ENCODE measurements at regions of chr1 and their contacts with region 1.

Region 1: DNA sequence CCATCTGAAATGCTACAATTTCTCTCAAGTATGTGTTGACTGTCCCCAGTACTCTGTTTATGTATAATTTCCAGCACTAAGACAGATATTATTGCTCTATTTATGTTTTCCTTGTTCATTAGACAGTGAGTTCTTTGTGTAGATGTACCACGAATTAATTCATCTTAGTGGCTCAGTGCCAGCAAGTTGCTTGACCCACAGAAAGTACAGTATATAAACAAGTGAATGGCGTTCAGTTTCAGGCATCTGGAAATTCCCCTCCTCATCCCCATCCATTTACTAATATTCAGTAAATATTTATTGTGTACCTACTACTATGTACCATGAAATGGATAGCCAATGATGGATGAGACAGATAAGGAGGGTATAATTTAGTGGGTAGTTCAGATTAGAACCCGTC is 104.3 kb downstream of the WDR3 start:
- DNase-seq: no peak
- H3K4me3 Mint-ChIP-seq: no peak overlapping the region
- H3K27ac Mint-ChIP-seq: no peak overlapping the region
- H3K4me1 Mint-ChIP-seq: no peaks in the 10 kb centered on the region
- H3K27me3 Mint-ChIP-seq: peaks cover 6% of the 10 kb centered on the region

Region 2: GRCh38 chr1:117967477-117967876 is 66.4 kb before region 1 on chr1:
- intact Hi-C with region 1: no loop called
- DNase-seq: no peak
- H3K4me3 Mint-ChIP-seq: no peak overlapping the region
- H3K27ac Mint-ChIP-seq: no peak overlapping the region
- H3K4me1 Mint-ChIP-seq: peaks cover 13% of the 10 kb centered on the region
- H3K27me3 Mint-ChIP-seq: no peaks in the 10 kb centered on the region

Region 3: GRCh38 chr1:118113261-118113660 is 79.4 kb after region 1 on chr1:
- intact Hi-C with region 1: loop called (anchors 2 kb)
- DNase-seq: no peak
- H3K4me3 Mint-ChIP-seq: no peak overlapping the region
- H3K27ac Mint-ChIP-seq: no peak overlapping the region
- H3K4me1 Mint-ChIP-seq: no peaks in the 10 kb centered on the region
- H3K27me3 Mint-ChIP-seq: peaks cover 3% of the 10 kb centered on the region

Measured in activated T-helper 1 cell treated with anti-CD3 and anti-CD28 coated beads, Interleukin-12 subunit alpha, Interleukin-12 subunit beta, Interleukin-2, Interleukin-4 antibody, amounts not matched to agents 30 ng/mL and 10 ng/mL and 1 ng/mL, durations not matched to agents 14 hours and 24 hours and 36 hours (primary cell).